ENCODE measurements at regions of chr3 and their contacts with region 1.

Region 1: GRCh38 chr3:27079427-27080257 is 289.5 kb downstream of the NEK10 start:
- DNase-seq: no peak
- H3K4me3 ChIP-seq: no peak overlapping the region
- H3K4me1 ChIP-seq: peaks cover 51% of the 10 kb centered on the region
- H3K27me3 ChIP-seq: no peaks in the 10 kb centered on the region

Region 2: GRCh38 chr3:26307787-26308186 is 771.9 kb before region 1 on chr3:
- in situ Hi-C with region 1: no loop called
- DNase-seq: no peak
- H3K4me3 ChIP-seq: no peak overlapping the region
- H3K4me1 ChIP-seq: no peaks in the 10 kb centered on the region
- H3K27me3 ChIP-seq: no peaks in the 10 kb centered on the region

Region 3: GRCh38 chr3:27043328-27043956 is 36.2 kb before region 1 on chr3:
- in situ Hi-C with region 1: loop called (anchors 5 kb)
- DNase-seq: peak; percentile 64 to 94
- H3K4me3 ChIP-seq: no peak overlapping the region
- H3K4me1 ChIP-seq: peaks cover 55% of the 10 kb centered on the region
- H3K27me3 ChIP-seq: no peaks in the 10 kb centered on the region